ENCODE measurements at regions of chr9 and their contacts with region 1.

Region 1: GRCh38 chr9:613771-614347 is 227.6 kb upstream of the DMRT1 start:
- DNase-seq: peak; percentile 75
- H3K4me3 Mint-ChIP-seq: peak overlapping the region; percentile 5
- H3K27ac Mint-ChIP-seq: no peak overlapping the region
- H3K4me1 Mint-ChIP-seq: peaks cover 28% of the 10 kb centered on the region
- H3K27me3 Mint-ChIP-seq: no peaks in the 10 kb centered on the region
- CTCF ChIP-seq: peak; percentile 68

Region 2: GRCh38 chr9:469672-470551 is 143.9 kb before region 1 on chr9:
- CTCF ChIA-PET with region 1: no interaction called
- POLR2A ChIA-PET with region 1: no interaction called
- intact Hi-C with region 1: no loop called
- DNase-seq: peak; percentile 91
- H3K4me3 Mint-ChIP-seq: peak overlapping the region; percentile 87
- H3K27ac Mint-ChIP-seq: peak overlapping the region; percentile 86
- H3K4me1 Mint-ChIP-seq: peaks cover 22% of the 10 kb centered on the region
- H3K27me3 Mint-ChIP-seq: no peaks in the 10 kb centered on the region
- CTCF ChIP-seq: no peak

Region 3: DNA sequence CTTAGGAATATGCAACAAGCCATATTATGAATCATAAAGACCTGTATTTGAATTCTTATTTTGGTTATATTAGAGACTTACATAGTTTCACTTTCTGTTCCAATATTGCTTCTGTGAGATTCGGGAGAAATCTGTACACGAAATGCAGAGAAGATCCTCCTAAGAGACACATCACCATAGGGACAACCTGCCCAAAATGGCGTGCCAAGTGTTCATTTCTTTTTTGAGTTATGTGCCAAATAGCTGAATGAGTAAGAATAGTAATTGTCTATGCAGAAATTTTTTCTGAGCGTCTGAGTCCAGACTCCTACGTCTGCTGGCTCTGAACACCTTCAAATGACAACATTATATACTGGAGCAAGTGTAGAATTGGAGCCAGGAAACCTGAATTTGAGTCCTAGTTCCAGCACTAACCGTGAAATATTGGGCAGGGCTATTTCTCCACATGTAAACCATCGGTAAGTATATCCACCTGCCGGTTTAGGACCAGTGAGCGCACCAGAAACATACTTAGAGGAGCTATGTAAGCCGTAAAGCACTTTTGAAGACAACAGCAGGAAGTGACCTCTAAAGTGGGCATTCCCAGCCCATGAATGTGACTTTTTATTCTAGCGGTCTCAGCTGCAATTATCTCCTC is 63.7 kb after region 1 on chr9:
- CTCF ChIA-PET with region 1: interaction called, 12 read pairs
- POLR2A ChIA-PET with region 1: interaction called, 6 read pairs
- intact Hi-C with region 1: no loop called
- DNase-seq: peak; percentile 30
- H3K4me3 Mint-ChIP-seq: peak overlapping the region; percentile 71
- H3K27ac Mint-ChIP-seq: peak overlapping the region; percentile 79
- H3K4me1 Mint-ChIP-seq: peaks cover 33% of the 10 kb centered on the region
- H3K27me3 Mint-ChIP-seq: no peaks in the 10 kb centered on the region
- CTCF ChIP-seq: no peak

Region 4: GRCh38 chr9:693201-694091 is 79.6 kb after region 1 on chr9:
- CTCF ChIA-PET with region 1: interaction called, 6 read pairs
- POLR2A ChIA-PET with region 1: interaction called, 4 read pairs
- intact Hi-C with region 1: loop called (anchors 5 kb)
- DNase-seq: peak; percentile 41
- H3K4me3 Mint-ChIP-seq: peak overlapping the region; percentile 63
- H3K27ac Mint-ChIP-seq: peak overlapping the region; percentile 75
- H3K4me1 Mint-ChIP-seq: peaks cover 52% of the 10 kb centered on the region
- H3K27me3 Mint-ChIP-seq: no peaks in the 10 kb centered on the region
- CTCF ChIP-seq: no peak

Region 5: GRCh38 chr9:763692-764524 is 150.0 kb after region 1 on chr9:
- CTCF ChIA-PET with region 1: interaction called, 6 read pairs
- POLR2A ChIA-PET with region 1: interaction called, 3 read pairs
- intact Hi-C with region 1: loop called (anchors 1 kb)
- DNase-seq: peak; percentile 71
- H3K4me3 Mint-ChIP-seq: no peak overlapping the region
- H3K27ac Mint-ChIP-seq: no peak overlapping the region
- H3K4me1 Mint-ChIP-seq: peaks cover 5% of the 10 kb centered on the region
- H3K27me3 Mint-ChIP-seq: peaks cover 13% of the 10 kb centered on the region
- CTCF ChIP-seq: peak; percentile 71

Region 6: GRCh38 chr9:893843-894420 is 280.1 kb after region 1 on chr9:
- CTCF ChIA-PET with region 1: no interaction called
- POLR2A ChIA-PET with region 1: no interaction called
- intact Hi-C with region 1: loop called (anchors 5 kb)
- DNase-seq: peak; percentile 77
- H3K4me3 Mint-ChIP-seq: no peak overlapping the region
- H3K27ac Mint-ChIP-seq: no peak overlapping the region
- H3K4me1 Mint-ChIP-seq: peaks cover 16% of the 10 kb centered on the region
- H3K27me3 Mint-ChIP-seq: no peaks in the 10 kb centered on the region
- CTCF ChIP-seq: peak; percentile 83

Measured in MCF 10A (cell line).